ENCODE measurements at regions of chr1 and their contacts with region 1.

Region 1: DNA sequence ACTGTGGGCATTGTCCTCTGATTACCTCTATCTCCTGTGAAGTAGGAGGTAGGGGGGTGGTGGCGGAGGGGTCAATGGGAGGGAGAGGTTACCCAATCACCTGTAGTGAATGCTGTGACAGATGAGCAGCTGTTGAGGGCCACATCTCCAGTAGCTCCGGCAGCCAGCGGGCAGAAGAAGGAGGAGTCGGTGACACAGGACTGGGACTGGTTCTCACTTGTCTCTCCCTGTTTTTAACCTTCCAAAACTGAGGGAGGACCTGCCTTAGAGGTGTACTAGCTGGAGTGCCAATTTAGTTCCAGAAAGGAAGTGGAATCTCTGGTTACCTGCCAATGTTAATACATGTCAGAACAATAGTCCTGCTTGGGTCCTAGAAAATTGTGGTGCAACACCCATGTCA is 56.2 kb upstream of the ENAH start:
- DNase-seq: peak; percentile 56 to 88
- H3K4me3 ChIP-seq: no peak overlapping the region
- CTCF ChIP-seq: no peak
- POLR2A ChIP-seq: no peak

Region 2: GRCh38 chr1:225733254-225733653 is 24.2 kb after region 1 on chr1:
- intact Hi-C with region 1: no loop called
- DNase-seq: no peak
- H3K4me3 ChIP-seq: no peak overlapping the region
- CTCF ChIP-seq: no peak
- POLR2A ChIP-seq: no peak

Region 3: GRCh38 chr1:225777583-225778336 is 68.7 kb after region 1 on chr1 and contains the start of gene SRP9:
- intact Hi-C with region 1: loop called (anchors 2 kb)
- DNase-seq: peak; percentile 99 to 100
- H3K4me3 ChIP-seq: peak within 1 kb of the TSS; percentile 85
- CTCF ChIP-seq: peak in 1 of 3 donors; percentile 94
- POLR2A ChIP-seq: peak in 1 of 2 donors; percentile 80
- total RNA-seq, gene SRP9: 117 to 191 (median 154) TPM